HEK293T (cell line): ENCODE measurements at regions of chr12 and their contacts with region 1.

Region 1: DNA sequence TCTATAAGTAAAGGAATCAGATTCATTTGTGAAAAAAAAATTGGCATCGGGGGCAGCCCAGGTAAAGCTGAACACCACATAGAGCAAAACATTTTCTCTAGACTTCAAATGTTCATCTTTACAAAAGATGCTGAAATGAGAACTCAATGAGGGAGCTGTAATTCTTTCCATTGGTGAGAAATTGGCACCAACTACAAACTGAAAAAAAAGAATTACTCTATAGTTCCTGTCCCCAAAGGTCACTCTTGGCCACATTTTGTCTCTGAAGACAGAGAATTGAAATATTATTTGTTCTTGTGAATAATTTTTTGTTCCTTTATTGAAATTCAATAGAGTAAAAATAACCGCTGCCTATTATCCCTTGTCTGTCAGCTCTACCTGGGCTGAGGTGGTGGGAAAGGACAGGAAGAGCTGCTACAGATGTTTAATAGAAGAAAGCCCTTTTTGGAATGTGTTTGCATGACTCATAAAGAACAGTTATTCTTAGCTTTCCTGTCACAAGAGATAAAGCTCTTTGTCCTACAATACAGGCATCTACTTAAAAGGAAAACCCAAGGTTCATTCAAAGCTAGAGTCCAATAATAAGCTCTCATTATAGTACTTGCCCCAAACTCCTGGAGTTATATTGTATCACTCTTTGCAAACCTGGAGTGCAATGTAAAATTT is 380.1 kb upstream of the KITLG start:
- DNase-seq: no peak

Region 2: GRCh38 chr12:88870000-88870737 is 90.2 kb before region 1 on chr12:
- CTCF ChIA-PET with region 1: no interaction called
- POLR2A ChIA-PET with region 1: no interaction called
- DNase-seq: no peak

Region 3: DNA sequence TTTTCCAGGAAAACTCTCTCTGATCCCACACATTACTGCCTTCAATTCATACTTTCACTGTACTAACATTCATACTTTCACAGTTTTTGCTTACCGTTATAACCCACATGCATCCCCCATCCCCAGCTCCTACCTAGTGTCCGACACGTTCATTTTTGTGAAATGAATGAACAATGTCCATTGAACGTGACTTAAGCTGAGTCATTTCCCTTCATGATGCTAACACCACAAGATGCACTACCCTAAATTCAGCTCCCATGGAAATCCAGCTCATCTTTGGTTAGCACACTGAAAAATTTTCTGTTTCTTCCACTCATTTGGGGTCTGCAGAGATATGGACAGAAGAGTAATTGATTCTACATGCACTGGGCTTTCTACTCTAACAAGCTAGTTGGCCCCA is 479.6 kb after region 1 on chr12:
- CTCF ChIA-PET with region 1: interaction called, 10 read pairs
- POLR2A ChIA-PET with region 1: no interaction called
- DNase-seq: no peak